Activated CD8-positive, alpha-beta T cell treated with anti-CD3 and anti-CD28 coated beads, Interleukin-2, amount 10 ng/mL, durations not matched to agents 7 days and 5 days (primary cell): ENCODE measurements at regions of chr12 and their contacts with region 1.

Region 1: GRCh38 chr12:54853995-54854566 is at the start of gene MUCL1:
- DNase-seq: peak; percentile 87
- ATAC-seq: peak; percentile 99
- H3K4me3 Mint-ChIP-seq: no peak within 1 kb of the TSS
- H3K27ac Mint-ChIP-seq: no peak within 1 kb of the TSS
- H3K4me1 Mint-ChIP-seq: peaks cover 13% of the 10 kb centered on the region
- H3K27me3 Mint-ChIP-seq: no peaks in the 10 kb centered on the region
- total RNA-seq, gene MUCL1: not detected

Region 2: DNA sequence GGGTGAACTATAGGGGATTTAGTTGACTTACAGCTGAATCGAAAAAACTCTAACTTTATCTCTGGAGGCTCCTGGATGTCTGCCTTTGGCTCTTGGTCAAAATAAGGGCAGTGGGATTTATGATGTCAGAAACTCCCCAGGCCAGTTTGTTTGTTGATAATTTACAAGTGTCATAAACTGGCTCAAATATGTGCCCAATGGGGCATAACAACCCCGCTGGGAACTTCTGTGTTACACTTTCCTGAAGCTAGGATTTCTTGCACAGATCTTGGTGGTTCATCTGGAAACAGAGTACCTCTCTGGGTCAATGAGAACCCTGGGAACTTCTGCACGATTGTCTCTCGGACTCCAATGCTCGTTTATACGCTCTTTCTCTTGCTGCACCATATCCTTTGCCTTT is 58.4 kb before region 1 on chr12:
- CTCF ChIA-PET with region 1: no interaction called
- POLR2A ChIA-PET with region 1: no interaction called
- DNase-seq: no peak
- ATAC-seq: no peak
- H3K4me3 Mint-ChIP-seq: no peak overlapping the region
- H3K27ac Mint-ChIP-seq: no peak overlapping the region
- H3K4me1 Mint-ChIP-seq: no peaks in the 10 kb centered on the region
- H3K27me3 Mint-ChIP-seq: no peaks in the 10 kb centered on the region

Region 3: DNA sequence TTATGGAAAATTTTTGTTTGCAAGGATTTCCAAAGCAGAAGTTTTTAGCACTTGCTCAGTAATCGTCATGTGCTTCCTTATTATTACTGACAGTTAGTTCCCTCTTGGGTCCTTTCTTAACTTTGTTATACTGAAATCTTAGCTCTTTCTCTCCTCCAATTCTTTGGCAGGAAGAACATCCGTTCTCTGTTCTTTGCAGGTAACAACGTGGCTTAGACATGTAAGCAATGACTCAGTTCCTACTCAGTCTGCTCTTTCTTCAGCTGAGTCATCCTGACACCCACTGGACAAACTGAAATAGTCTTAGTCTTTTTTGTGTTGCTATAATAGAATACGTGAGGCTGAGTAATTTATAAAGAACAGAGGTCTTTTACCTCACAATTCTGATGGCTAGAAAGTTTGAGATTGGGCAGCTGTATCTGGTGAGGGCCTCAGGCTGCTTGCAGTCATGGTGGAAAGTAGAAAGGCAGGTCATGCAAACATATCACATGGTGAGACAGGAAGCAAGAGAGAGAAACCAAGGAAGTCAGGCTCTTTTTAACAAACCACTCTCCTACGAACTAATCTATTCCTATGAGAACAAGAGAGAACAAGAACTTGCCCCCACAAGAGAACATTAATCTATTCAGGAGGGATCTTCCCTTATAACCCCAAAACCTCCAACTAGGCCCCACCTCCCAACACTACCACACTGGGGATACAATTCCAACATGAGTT is 81.3 kb after region 1 on chr12:
- CTCF ChIA-PET with region 1: interaction called, 17 read pairs
- POLR2A ChIA-PET with region 1: interaction called, 4 read pairs
- DNase-seq: peak; percentile 67
- ATAC-seq: peak; percentile 91
- H3K4me3 Mint-ChIP-seq: peak overlapping the region; percentile 36
- H3K27ac Mint-ChIP-seq: peak overlapping the region; percentile 97
- H3K4me1 Mint-ChIP-seq: peaks cover 54% of the 10 kb centered on the region
- H3K27me3 Mint-ChIP-seq: no peaks in the 10 kb centered on the region